BJ (cell line): ENCODE measurements at regions of chr13 and their contacts with region 1.

Region 1: GRCh38 chr13:91158017-91158395 is 189.5 kb upstream of the MIR17HG start:
- DNase-seq: no peak
- H3K4me3 ChIP-seq: no peak overlapping the region
- H3K27me3 ChIP-seq: no peaks in the 10 kb centered on the region
- CTCF ChIP-seq: no peak

Region 2: DNA sequence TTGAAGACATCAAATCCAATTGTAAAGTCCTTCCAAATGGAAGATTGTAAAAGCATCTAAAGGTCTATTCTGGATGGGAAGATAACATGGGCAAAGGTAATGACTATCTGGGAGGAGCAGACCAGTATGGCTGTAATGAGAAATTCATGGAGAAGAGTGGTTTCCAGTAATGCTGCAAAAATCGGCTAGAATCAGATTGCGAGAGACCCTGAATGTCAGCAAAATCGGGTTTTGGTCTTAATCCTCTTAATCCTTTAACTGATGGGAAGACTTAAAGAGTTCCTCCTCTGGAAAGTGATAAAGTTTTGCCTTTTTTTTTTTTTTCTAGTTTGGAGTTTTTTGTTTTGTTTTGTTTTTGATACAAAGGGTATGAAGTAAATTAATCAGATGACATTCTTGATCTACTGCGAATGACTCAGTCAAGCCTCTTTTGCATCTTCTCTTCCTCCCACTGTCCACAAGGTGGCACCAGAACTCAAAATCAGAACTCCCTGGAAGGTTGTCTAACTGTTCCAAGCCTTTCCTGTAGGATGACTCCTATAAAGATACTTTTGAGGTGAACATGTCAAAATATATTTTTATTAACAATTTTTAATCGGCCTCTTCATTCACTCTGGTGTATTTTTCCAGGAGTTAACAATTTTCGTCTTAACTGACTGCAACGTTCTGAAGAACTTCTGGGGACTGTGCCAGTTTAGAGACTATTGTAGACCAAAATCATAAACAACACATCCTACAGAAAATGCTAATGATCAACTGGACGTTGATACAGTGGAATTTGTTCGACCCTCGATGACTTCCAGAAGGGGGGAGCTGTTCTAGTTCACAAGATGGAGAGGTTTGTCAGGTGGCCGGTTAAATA is 23.8 kb before region 1 on chr13:
- CTCF ChIA-PET with region 1: interaction called, 12 read pairs
- POLR2A ChIA-PET with region 1: no interaction called
- DNase-seq: no peak
- H3K4me3 ChIP-seq: no peak overlapping the region
- H3K27me3 ChIP-seq: no peaks in the 10 kb centered on the region
- CTCF ChIP-seq: peak; percentile 73

Region 3: DNA sequence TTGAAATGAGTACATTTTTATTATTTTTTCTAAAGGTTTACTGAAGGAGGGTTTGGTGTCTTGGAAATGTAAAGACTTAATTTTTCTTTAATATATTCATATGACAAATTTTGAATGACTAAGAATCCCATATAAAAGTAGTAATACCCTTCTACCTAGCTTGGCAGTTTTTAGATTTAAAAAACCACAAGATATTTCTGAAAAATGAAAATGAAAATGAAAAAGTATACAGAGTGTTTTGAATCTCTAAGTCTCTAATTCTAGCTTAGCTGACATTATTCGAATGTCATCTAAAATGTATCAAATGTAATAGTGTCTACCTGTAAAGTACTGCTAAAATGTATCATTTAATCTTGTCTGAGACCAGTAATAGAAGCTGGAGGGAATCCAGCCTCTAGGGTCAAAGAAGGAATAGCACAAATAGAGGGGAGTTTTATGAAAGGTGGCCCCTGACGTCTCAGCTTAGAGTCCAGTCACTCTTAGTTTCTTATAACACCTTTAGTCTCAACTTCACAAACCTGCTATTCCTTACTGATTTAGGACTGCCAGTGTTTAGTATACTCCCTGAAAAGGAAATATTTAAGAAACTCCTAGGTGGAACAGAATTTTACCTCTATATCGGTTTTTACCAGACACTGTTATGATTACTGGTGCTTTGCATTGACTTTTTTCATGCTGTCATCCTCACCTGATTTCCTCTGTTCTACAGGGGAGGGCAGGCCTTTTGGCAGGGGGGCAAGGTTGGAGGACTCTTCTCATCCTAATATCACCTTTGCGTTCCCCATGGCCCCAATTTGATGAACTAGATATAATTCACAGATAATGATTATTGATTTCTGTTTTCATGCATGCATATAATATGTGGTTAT is 173.3 kb after region 1 on chr13:
- CTCF ChIA-PET with region 1: no interaction called
- POLR2A ChIA-PET with region 1: no interaction called
- DNase-seq: no peak
- H3K4me3 ChIP-seq: no peak overlapping the region
- H3K27me3 ChIP-seq: no peaks in the 10 kb centered on the region
- CTCF ChIP-seq: no peak

Region 4: DNA sequence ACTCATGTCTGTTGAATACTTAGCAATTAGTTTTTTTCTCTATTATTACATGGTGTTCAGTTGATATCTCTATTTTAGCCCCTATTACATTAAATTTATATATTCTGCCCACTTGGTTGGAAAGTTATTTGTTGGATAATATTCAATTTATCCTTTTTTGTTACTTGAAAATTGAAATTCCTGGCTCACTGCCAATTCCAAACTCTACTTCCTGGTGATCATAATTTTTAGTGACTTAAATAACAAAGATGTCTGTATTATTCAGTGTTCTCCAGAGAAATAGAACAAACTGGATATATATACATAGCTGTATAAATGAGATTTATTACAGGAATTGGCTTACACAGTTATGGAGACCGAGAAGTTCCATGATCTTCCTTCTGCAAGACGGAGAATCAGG is 334.0 kb after region 1 on chr13:
- CTCF ChIA-PET with region 1: no interaction called
- POLR2A ChIA-PET with region 1: no interaction called
- DNase-seq: no peak
- H3K4me3 ChIP-seq: no peak overlapping the region
- H3K27me3 ChIP-seq: no peaks in the 10 kb centered on the region
- CTCF ChIP-seq: no peak